Activated CD4-positive, alpha-beta T cell treated with anti-CD3 and anti-CD28 coated beads for 36 hours (primary cell): ENCODE measurements at regions of chr1 and their contacts with region 1.

Region 1: DNA sequence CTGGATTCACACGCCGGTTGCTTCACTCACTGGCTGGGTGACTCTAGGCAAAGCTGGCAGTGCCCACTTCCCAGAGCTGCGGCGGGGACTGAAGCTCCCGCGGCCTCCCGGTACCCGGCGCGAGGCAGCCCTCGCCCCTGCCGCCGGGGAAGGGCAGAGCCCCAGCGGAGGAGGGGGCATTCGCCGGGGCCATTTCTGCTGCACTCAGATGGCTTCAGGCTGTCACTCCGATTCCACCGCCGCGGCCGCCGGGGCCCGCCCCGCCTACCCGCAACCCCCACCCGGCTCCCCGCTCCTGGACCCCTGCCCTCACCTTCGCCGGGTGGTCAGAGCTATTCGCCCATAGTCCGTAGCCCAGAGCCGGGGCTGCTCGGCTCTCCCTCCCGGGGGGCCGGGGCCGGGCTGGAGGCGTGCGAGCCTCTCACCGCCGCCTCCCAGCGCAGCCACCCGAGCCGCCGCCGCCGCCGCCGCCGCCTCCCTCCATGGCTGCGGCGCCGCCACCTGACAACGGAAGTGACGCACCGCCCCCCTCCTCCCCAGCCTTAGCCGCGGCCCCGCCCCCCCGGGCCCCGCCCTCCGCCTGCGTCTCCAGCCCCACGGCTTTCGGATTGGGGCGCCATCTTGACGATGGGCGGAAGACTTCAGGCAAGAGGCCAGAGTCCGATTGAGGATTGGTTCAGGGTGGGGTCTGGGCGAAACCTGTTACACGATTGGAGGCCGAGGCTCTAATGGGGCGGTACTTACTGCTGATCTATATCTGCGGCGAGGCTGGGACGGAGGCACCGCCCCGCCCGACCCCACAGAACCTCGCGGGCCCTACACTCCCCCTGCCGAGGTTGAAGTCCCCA is at the start of gene STK40:
- DNase-seq: peak; percentile 99
- ATAC-seq: peak; percentile 88
- H3K4me3 Mint-ChIP-seq: peak within 1 kb of the TSS; percentile 81
- H3K27ac Mint-ChIP-seq: peak within 1 kb of the TSS; percentile 100
- H3K4me1 Mint-ChIP-seq: peaks cover 58% of the 10 kb centered on the region
- H3K27me3 Mint-ChIP-seq: no peaks in the 10 kb centered on the region
- total RNA-seq, gene STK40: 38.8 to 51.3 TPM

Region 2: DNA sequence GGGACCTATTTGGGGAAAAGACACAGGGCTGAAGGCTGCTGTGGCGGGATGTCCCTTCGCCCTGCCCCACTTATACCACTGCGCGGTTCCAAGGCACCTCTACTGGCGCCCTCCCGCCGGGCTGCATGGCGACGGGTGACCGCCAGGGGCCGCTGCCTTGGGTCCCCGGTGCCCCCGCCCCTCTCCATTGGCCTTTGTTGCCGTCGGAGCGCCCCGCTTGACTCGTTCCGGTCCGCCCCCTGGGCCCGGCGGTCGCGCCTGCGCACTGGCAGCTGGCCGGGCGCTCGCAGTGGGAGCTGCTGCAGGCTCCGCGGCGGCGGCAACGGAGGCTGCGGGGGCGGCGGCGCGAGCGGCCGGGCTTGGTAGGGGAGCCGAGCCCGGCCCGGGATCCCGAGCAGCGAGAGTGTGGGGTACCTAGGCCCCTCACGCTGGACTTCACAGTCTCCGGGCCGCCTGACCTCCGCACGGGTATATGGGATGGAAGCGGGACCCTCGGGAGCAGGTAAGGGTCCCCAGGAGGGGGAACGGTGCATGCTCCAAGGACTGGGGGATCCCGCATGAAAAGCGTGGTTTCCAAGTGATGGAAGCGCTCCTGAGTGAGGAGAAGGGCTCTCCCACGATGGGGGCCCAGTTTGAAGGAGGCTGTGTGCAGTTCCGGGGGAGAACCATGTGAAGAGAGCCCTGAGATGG is 502.5 kb before region 1 on chr1 and contains the start of gene AGO1:
- CTCF ChIA-PET with region 1: no interaction called
- POLR2A ChIA-PET with region 1: no interaction called
- intact Hi-C with region 1: loop called in 1 of 2 experiments (anchors 10 kb)
- DNase-seq: peak; percentile 98
- ATAC-seq: peak; percentile 95
- H3K4me3 Mint-ChIP-seq: peak within 1 kb of the TSS; percentile 91
- H3K27ac Mint-ChIP-seq: peak within 1 kb of the TSS; percentile 73
- H3K4me1 Mint-ChIP-seq: peaks cover 46% of the 10 kb centered on the region
- H3K27me3 Mint-ChIP-seq: no peaks in the 10 kb centered on the region
- total RNA-seq, gene AGO1: 31.5 to 34.6 TPM

Region 3: DNA sequence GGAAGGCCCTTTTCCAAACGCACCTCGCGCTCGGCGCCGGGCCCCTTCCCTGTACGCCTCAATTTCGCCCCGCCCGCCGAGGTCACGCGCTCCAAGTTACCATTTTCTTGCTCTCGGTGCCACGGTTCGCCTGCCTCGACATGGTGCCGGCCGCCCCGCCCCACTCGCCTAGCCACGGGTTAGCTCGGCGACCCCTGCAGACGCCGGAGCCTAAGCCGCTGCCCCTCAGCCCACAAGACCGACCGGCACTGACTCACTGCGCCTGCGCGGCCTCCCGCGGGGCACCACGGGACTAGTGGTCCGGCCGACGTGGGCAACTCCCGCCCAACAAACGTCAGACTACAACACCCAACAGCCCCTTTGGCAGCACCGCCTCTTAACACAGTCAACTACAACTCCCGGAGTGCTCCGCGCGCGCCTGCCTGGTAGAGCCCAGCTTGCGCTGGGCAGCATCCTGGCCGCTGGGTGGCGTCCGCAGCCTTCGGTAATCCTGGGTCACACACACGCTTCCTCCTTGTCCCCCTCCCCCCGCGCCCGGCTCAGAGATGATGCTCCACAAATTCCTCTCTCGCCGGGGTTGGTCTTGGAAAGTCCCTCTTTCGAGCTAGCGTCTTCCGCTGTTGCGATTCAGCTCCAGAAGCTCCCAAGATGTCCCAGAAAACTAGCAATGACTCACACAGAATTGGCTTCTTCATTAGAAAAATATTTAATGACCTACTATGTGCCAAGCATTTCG is 236.2 kb before region 1 on chr1 and contains the start of gene TRAPPC3:
- CTCF ChIA-PET with region 1: interaction called, 5 read pairs
- POLR2A ChIA-PET with region 1: interaction called, 9 read pairs
- intact Hi-C with region 1: loop called (anchors 1 kb)
- DNase-seq: peak; percentile 100
- ATAC-seq: peak; percentile 93
- H3K4me3 Mint-ChIP-seq: peak within 1 kb of the TSS; percentile 95
- H3K27ac Mint-ChIP-seq: peak within 1 kb of the TSS; percentile 94
- H3K4me1 Mint-ChIP-seq: peaks cover 67% of the 10 kb centered on the region
- H3K27me3 Mint-ChIP-seq: no peaks in the 10 kb centered on the region
- total RNA-seq, gene TRAPPC3: 43.8 to 53.8 TPM

Region 4: GRCh38 chr1:36257375-36257767 is 128.3 kb before region 1 on chr1:
- CTCF ChIA-PET with region 1: no interaction called
- POLR2A ChIA-PET with region 1: no interaction called
- intact Hi-C with region 1: no loop called
- DNase-seq: peak; percentile 33
- ATAC-seq: peak; percentile 60
- H3K4me3 Mint-ChIP-seq: no peak overlapping the region
- H3K27ac Mint-ChIP-seq: no peak overlapping the region
- H3K4me1 Mint-ChIP-seq: peaks cover 43% of the 10 kb centered on the region
- H3K27me3 Mint-ChIP-seq: no peaks in the 10 kb centered on the region

Region 5: DNA sequence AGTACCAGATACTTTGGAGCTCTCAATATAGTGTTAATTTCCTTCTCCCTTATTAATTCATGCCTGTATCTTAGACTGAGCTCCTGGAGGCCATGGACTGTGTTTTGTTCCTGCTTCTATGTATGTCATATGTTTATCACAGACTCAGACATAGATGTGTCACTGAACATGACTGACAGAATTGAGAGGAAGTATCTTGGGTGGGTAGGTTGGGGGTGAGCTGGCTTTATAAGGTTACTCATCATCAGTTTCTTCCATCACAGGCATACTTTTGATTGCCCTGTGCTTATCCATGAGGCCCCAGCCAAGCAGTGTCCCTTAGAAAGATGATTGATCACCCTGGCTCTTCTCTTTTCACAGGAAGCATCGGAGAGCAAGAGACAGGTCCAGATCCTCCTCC is 85.1 kb before region 1 on chr1:
- CTCF ChIA-PET with region 1: interaction called, 8 read pairs
- POLR2A ChIA-PET with region 1: interaction called, 6 read pairs
- intact Hi-C with region 1: loop called (anchors 1 kb)
- DNase-seq: peak; percentile 49
- ATAC-seq: peak; percentile 72
- H3K4me3 Mint-ChIP-seq: peak overlapping the region; percentile 3
- H3K27ac Mint-ChIP-seq: peak overlapping the region; percentile 87
- H3K4me1 Mint-ChIP-seq: peaks cover 64% of the 10 kb centered on the region
- H3K27me3 Mint-ChIP-seq: no peaks in the 10 kb centered on the region

Region 6: GRCh38 chr1:36397378-36398230 is 12.0 kb after region 1 on chr1 and contains the start of gene LSM10:
- CTCF ChIA-PET with region 1: interaction called, 15 read pairs
- POLR2A ChIA-PET with region 1: interaction called, 24 read pairs
- intact Hi-C with region 1: loop called (anchors 1 kb)
- DNase-seq: peak; percentile 96
- ATAC-seq: peak; percentile 89
- H3K4me3 Mint-ChIP-seq: peak within 1 kb of the TSS; percentile 90
- H3K27ac Mint-ChIP-seq: peak within 1 kb of the TSS; percentile 99
- H3K4me1 Mint-ChIP-seq: peaks cover 25% of the 10 kb centered on the region
- H3K27me3 Mint-ChIP-seq: no peaks in the 10 kb centered on the region
- total RNA-seq, gene LSM10: 40.6 to 44.0 TPM

Region 7: DNA sequence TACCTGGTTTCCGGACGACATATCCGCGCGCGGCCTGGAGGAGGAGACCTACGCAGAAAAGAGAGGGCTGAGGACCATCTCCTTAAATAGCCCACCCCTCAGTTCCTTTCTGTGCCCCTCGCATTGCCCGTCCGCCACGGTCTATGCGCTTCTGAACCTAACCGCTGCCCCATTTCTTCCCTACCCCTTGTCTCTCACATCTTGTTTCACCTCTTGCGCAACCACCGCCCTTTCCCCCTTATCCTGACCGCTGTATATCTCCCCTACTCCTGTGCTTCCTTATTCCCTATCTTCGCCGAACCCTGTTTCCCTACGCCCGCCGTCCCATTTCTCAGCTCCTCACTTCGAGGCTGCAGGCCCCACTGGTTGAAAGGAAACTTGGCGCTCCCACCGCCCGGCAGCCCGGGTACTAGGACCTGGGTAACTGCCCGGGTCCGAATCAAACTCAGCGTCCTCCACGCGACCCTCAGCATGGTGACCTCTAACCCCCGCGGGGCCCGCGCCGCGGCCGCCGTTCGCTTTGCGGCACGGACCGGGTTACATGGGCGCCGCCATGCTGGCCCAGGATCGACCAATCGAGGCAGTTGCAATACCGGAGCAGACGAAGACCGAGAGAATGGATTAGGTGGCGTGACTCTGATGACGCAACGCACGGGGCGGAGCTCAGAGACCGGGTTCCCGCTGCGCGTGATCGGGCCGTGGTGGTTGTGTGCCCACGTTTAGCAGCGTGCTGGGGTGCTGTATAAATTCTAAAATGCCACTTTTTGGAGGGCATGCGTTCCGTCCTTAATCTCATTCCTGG is 78.4 kb after region 1 on chr1 and contains the start of gene MRPS15:
- CTCF ChIA-PET with region 1: interaction called, 3 read pairs
- POLR2A ChIA-PET with region 1: interaction called, 11 read pairs
- intact Hi-C with region 1: loop called (anchors 1 to 5 kb)
- DNase-seq: peak; percentile 98
- ATAC-seq: peak; percentile 94
- H3K4me3 Mint-ChIP-seq: peak within 1 kb of the TSS; percentile 97
- H3K27ac Mint-ChIP-seq: peak within 1 kb of the TSS; percentile 97
- H3K4me1 Mint-ChIP-seq: peaks cover 31% of the 10 kb centered on the region
- H3K27me3 Mint-ChIP-seq: no peaks in the 10 kb centered on the region
- total RNA-seq, gene MRPS15: 123 to 169 TPM

Region 8: GRCh38 chr1:36567601-36568341 is 182.1 kb after region 1 on chr1:
- CTCF ChIA-PET with region 1: no interaction called
- POLR2A ChIA-PET with region 1: no interaction called
- intact Hi-C with region 1: no loop called
- DNase-seq: no peak
- ATAC-seq: no peak
- H3K4me3 Mint-ChIP-seq: no peak overlapping the region
- H3K27ac Mint-ChIP-seq: no peak overlapping the region
- H3K4me1 Mint-ChIP-seq: no peaks in the 10 kb centered on the region
- H3K27me3 Mint-ChIP-seq: peaks cover 5% of the 10 kb centered on the region